OCI-LY7 (cell line): ENCODE measurements at regions of chr9 and their contacts with region 1.

Region 1: DNA sequence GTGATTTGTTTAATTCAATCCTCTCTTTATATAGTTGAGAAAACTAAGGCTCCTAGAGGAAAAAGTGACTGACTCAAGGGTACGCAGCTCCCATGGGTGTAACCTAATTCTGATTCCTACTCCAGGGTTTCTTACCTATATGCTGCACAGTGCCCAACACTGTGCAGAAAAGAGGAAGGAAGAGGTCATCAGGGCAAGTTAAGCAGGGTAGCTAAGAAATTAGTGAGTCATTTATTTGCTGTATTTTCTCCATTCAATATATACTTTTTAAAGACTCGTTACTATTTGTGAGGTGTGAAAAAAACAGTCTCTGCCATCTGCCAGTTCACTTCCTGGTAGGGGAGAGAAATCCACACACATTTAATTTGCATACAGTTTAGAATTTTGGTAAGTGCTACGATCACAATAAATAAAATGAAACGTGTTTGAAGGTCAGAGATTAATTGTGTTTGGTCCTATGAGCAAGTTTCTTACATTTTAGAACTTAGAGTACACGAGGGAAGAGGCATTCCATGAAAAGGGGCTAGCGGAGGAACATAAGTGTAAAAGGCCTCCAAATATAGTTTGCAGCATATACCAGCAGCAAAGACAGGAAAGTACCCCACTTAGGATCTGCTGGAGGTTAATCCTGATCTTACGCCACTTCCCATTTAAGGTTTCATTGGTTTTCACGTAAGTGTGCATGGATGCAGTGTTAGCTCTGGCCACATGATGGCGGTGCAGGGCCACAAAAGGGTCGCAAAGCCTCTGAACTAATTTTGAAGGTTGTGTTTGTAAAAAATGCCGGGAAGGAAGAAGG is 59.9 kb upstream of the TLR4 start:
- DNase-seq: peak; percentile 74
- H3K4me3 ChIP-seq: peak overlapping the region; percentile 32
- H3K27ac ChIP-seq: no peak overlapping the region
- H3K4me1 ChIP-seq: peaks cover 12% of the 10 kb centered on the region
- CTCF ChIP-seq: peak; percentile 99

Region 2: DNA sequence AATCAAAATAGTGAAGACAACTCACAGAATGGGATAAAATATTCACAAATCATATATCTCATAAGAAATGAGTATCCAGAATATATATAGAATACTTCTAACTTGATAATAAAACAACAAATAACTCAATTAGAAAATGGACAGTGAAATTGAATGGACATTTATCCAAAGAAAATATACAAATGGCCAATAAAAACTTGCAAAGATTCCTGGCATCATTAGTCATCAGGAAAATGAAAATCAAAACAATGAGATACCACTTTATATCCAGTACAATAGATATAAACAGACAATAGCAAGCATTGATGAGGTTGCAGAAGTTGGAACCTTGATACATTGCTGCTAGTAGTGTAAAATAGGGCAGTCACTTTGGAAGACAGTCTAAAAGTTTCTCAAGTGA is 47.0 kb after region 1 on chr9:
- CTCF ChIA-PET with region 1: no interaction called
- POLR2A ChIA-PET with region 1: no interaction called
- intact Hi-C with region 1: no loop called
- DNase-seq: no peak
- H3K4me3 ChIP-seq: no peak overlapping the region
- H3K27ac ChIP-seq: no peak overlapping the region
- H3K4me1 ChIP-seq: peaks cover 19% of the 10 kb centered on the region
- CTCF ChIP-seq: no peak

Region 3: GRCh38 chr9:117704024-117704575 is 59.8 kb after region 1 on chr9 and contains the start of gene TLR4:
- CTCF ChIA-PET with region 1: no interaction called
- POLR2A ChIA-PET with region 1: interaction called, 3 read pairs
- intact Hi-C with region 1: loop called (anchors 5 kb)
- DNase-seq: peak; percentile 90
- H3K4me3 ChIP-seq: peak within 1 kb of the TSS; percentile 74
- H3K27ac ChIP-seq: peak within 1 kb of the TSS; percentile 82
- H3K4me1 ChIP-seq: peaks cover 37% of the 10 kb centered on the region
- CTCF ChIP-seq: no peak
- total RNA-seq, gene TLR4: 4.0 and 4.4 TPM in 2 replicates

Region 4: DNA sequence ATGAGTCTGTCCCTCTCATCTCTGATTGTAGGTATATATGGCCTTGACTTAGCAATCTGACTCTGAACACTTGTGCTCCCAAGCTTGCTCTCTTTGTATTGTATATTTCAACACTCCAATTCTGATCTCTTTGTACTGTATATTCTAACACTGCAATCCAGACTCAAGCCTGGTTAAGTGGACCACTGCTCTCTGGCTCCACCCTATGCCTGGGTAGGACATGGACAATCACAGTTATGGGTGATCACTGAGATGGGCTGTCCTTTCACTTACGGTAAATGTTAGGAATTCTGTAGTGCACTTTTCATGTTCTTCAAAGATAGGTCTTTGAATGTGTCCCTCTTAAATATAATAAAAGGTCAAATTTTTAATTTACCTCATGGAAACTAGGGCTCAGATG is 225.0 kb after region 1 on chr9:
- CTCF ChIA-PET with region 1: no interaction called
- POLR2A ChIA-PET with region 1: no interaction called
- intact Hi-C with region 1: no loop called
- DNase-seq: no peak
- H3K4me3 ChIP-seq: no peak overlapping the region
- H3K27ac ChIP-seq: no peak overlapping the region
- H3K4me1 ChIP-seq: no peaks in the 10 kb centered on the region
- CTCF ChIP-seq: peak; percentile 38; the same call in 1 of the 2 replicates

Region 5: DNA sequence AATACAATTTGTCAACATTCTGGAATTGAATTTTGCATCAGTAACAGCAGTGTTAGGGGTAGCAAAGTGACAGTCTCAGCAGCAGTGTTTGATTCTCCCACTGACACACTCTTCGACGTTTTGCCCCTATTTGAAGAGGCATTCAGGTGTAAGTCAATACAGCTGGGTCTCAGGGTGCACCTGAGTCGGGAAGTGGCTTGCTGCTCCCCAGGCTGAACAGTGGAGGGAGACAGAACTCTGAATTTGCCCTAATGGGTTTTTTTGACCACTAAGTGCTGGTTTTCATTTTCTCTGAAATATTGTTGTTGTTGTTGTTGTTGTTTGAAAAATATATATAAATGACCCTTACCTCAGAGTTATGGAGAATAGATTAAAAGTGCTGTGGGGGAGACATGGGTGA is 283.0 kb after region 1 on chr9:
- CTCF ChIA-PET with region 1: no interaction called
- POLR2A ChIA-PET with region 1: no interaction called
- intact Hi-C with region 1: loop called (anchors 1 kb)
- DNase-seq: peak; percentile 26
- H3K4me3 ChIP-seq: no peak overlapping the region
- H3K27ac ChIP-seq: no peak overlapping the region
- H3K4me1 ChIP-seq: no peaks in the 10 kb centered on the region
- CTCF ChIP-seq: peak; percentile 72

Region 6: DNA sequence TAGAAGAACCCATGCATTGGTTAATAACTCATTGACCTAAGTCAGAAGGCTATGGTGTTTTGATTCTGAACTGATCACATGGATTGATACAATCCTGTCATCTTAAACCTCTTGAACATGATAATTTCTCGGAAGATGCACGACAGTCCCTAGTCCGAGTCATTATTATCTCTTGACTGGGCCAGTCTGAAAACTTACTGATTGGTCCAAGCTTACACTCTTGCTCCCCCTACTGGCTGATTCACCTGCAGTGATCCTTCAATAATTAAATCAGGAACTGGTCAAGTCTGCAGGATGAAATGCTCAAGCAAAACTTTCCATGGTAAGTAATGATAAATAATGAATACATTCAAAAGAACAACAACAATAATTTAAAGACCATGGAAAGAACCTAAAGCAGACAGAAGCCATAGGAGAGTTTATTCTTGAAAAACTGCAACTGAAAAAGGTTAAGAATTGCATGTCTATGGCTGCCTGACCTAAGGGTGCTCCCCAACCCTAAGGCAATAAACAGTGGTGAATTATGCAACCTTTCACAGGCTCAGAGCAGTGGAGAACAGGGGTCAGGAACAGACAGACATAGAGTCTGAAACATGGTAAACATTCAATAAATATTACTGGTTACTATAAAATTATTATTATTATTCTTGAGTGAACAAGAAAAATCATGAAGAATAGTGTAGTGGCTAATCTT is 1645.6 kb after region 1 on chr9:
- CTCF ChIA-PET with region 1: no interaction called
- POLR2A ChIA-PET with region 1: no interaction called
- intact Hi-C with region 1: loop called (anchors 10 kb)
- DNase-seq: peak; percentile 65
- H3K4me3 ChIP-seq: no peak overlapping the region
- H3K27ac ChIP-seq: no peak overlapping the region
- H3K4me1 ChIP-seq: no peaks in the 10 kb centered on the region
- CTCF ChIP-seq: peak; percentile 93